ENCODE measurements at regions of chr20 and their contacts with region 1.

Region 1: DNA sequence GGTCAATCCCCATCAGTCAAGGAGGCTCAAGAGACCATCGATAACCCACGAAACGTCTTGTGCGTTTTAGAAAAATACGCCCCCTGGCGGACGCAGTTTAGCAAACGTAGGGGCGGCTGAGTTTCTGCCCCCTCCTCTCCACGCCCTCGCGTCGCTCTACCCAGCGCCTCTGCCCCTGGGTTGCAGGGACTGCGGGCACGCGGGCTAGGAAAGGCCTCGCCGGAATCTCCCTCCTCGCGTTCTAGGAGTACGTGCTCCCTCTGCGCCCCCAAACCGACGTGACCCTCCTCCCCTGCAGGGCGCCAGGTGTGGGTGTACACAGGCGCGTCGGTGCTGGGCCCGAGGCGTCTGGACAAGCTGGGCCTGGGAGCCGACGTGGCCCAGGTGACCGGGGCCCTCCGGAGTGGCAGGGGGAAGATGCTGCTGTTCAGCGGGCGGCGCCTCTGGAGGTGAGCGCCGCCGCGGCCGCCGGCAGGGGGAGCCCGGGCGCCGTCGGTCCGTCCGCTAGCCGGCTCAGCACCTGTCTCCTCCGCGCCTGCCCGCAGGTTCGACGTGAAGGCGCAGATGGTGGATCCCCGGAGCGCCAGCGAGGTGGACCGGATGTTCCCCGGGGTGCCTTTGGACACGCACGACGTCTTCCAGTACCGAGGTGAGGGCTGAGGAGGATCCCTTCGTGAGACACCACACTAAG is 5.3 kb downstream of the MMP9 start:
- DNase-seq: peak; percentile 52
- H3K4me3 Mint-ChIP-seq: no peak overlapping the region
- H3K27ac Mint-ChIP-seq: no peak overlapping the region
- H3K4me1 Mint-ChIP-seq: no peaks in the 10 kb centered on the region
- H3K27me3 Mint-ChIP-seq: peaks cover 31% of the 10 kb centered on the region
- CTCF ChIP-seq: peak; percentile 74

Region 2: GRCh38 chr20:45993197-45993951 is 20.6 kb before region 1 on chr20:
- CTCF ChIA-PET with region 1: interaction called, 146 read pairs
- POLR2A ChIA-PET with region 1: interaction called, 13 read pairs
- intact Hi-C with region 1: no loop called
- DNase-seq: peak; percentile 97
- H3K4me3 Mint-ChIP-seq: peak overlapping the region; percentile 33
- H3K27ac Mint-ChIP-seq: peak overlapping the region; percentile 57
- H3K4me1 Mint-ChIP-seq: peaks cover 25% of the 10 kb centered on the region
- H3K27me3 Mint-ChIP-seq: no peaks in the 10 kb centered on the region
- CTCF ChIP-seq: no peak

Region 3: DNA sequence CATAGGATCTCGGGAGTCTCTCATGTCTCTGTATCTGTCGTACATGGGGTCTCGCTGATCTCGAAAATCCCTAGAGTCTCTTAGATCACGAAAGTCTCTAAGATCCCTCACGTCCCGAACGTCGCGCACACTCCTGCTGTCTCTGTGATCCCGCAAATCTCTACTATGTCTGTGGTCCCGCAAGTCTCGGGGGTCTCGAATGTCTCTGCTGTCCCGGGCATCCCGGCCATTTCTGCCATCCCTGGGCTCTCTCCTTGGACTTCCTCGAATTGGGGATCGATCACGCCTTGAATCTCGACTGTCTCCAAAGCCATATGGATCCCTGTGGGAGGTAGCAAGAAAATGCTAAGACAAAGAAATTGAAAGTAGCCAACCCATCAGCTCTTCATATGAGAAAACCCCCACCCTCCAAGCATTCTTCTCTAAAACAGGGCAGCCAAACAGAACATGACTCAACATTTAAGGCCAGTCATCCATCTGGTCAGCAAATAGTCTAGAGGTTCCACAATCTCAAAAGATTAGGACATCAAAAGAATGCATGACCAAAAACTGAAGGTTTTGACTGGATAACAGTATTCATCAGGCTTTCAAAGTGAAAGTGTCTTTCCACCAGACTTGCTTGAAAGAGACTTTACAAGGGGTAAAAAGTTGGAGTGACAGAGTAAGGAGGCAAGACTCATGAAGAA is 56.4 kb after region 1 on chr20:
- CTCF ChIA-PET with region 1: interaction called, 10 read pairs
- POLR2A ChIA-PET with region 1: no interaction called
- intact Hi-C with region 1: no loop called
- DNase-seq: no peak
- H3K4me3 Mint-ChIP-seq: no peak overlapping the region
- H3K27ac Mint-ChIP-seq: no peak overlapping the region
- H3K4me1 Mint-ChIP-seq: peaks cover 8% of the 10 kb centered on the region
- H3K27me3 Mint-ChIP-seq: no peaks in the 10 kb centered on the region
- CTCF ChIP-seq: no peak

Region 4: GRCh38 chr20:46089417-46090388 is 75.7 kb after region 1 on chr20 and contains the start of gene NCOA5:
- CTCF ChIA-PET with region 1: interaction called, 25 read pairs
- POLR2A ChIA-PET with region 1: interaction called, 4 read pairs
- intact Hi-C with region 1: no loop called
- DNase-seq: peak; percentile 93
- H3K4me3 Mint-ChIP-seq: peak within 1 kb of the TSS; percentile 84
- H3K27ac Mint-ChIP-seq: peak within 1 kb of the TSS; percentile 85
- H3K4me1 Mint-ChIP-seq: peaks cover 28% of the 10 kb centered on the region
- H3K27me3 Mint-ChIP-seq: no peaks in the 10 kb centered on the region
- CTCF ChIP-seq: no peak
- total RNA-seq, gene NCOA5: 26.0 and 31.2 TPM in 2 replicates

Region 5: GRCh38 chr20:46438156-46438750 is 424.3 kb after region 1 on chr20:
- CTCF ChIA-PET with region 1: interaction called, 11 read pairs
- POLR2A ChIA-PET with region 1: no interaction called
- intact Hi-C with region 1: no loop called
- DNase-seq: peak; percentile 41
- H3K4me3 Mint-ChIP-seq: no peak overlapping the region
- H3K27ac Mint-ChIP-seq: no peak overlapping the region
- H3K4me1 Mint-ChIP-seq: peaks cover 10% of the 10 kb centered on the region
- H3K27me3 Mint-ChIP-seq: peaks cover 55% of the 10 kb centered on the region
- CTCF ChIP-seq: peak; percentile 39

Measured in MCF 10A (cell line).